ENCODE measurements at regions of chr17 and their contacts with region 1.

Region 1: GRCh38 chr17:30477083-30477773 is at the start of gene GOSR1:
- DNase-seq: peak; percentile 91 to 99 (median 94)

Region 2: GRCh38 chr17:30340801-30341356 is 136.3 kb before region 1 on chr17:
- intact Hi-C with region 1: loop called (anchors 2 kb)
- DNase-seq: no peak

Region 3: GRCh38 chr17:30378824-30379302 is 98.4 kb before region 1 on chr17 and contains the start of gene CPD:
- intact Hi-C with region 1: loop called (anchors 5 kb)
- DNase-seq: peak; percentile 96 to 100 (median 99)

Region 4: DNA sequence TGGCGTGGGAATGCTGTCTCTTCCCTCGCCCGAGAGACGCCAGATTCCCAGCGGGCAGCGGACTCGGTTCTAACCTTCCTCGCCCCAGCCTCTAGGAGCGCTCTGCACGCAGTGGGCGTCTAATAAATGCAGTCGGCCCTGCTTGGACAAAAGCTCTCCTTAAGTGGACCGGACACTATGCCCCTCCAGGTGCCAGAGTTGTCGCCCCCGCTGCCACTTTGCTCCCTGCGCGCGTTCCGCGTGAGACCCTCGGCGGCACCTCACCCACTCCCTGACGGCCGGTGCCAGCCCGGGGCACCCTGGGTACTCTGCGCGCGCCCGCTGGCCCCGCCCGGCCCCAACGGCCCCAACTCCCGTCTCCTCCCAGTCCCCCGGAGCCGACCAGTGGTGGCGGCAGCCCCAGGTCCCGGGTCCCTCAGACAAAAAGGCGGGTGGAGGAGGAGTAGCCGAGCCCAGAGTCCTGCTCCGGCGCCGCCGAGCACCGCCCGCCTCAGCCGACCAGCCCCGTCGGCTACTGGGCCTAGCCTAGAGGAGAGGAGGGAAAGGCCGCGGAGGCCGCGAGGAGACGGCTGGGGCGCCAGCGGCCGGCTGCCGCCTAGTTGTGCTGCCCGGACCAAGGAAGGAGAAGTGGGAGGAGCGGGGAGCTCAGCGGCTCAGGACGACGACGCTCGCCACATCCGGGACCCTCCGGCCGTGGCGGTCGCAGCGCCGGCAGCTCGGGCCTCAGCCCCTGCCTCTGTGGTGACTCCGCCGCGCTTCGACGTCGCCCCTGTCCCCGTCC is 123.0 kb after region 1 on chr17:
- intact Hi-C with region 1: loop called (anchors 2 kb)
- DNase-seq: peak; percentile 47 to 96 (median 70)

Region 5: DNA sequence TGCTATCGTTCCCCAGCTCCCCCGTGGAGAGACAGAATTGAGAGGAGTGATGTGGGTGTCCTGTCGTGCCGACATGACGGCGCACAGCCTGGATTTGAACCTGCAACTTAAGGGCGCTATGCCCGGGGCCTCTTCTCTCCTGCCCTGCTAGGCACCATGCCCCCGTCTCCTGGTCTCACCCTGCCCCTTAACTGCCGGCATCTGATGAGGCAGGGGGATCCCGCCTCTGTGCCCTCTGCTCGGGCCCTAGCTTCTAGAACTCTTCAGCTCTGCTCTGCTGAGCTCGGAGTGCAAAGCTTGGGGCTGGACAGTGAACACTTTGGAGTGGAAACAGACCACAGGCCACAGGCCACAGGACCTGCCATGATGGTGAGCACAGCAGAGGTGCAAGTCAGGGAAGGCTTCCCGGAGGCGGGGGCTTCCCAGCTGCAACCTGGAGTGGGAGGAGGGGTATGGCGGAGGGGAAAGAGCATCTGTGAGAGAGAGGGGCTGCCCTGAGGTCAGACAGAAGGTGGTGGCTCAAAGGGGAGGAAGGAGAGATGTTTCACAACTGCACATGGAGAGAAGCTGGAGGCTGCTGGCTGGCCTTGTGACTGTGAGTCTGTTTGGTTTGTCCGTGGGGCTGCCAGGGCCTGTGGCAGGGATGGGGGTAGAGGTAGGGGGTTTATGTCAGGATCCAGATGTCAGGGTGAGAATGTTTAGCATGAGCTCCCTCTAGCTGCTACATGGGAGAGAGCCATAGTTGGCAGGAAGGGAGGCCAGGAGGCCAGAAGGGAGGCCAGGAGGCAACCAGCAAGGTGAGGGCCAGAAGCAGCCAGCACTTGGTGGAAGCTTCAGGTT is 239.5 kb after region 1 on chr17:
- intact Hi-C with region 1: loop called (anchors 5 kb)
- DNase-seq: peak in 3 of 10 donors; percentile 39 to 73 (median 65)

Region 6: GRCh38 chr17:30824356-30825145 is 347.3 kb after region 1 on chr17 and contains the start of gene CRLF3:
- intact Hi-C with region 1: loop called (anchors 10 kb)
- DNase-seq: peak; percentile 78 to 99 (median 88)